Dendritic cell treated with granulocyte-macrophage colony-stimulating factor and Interleukin-4, amounts not matched to agents 40 ng/mL and 50 ng/mL, for 4 days (primary cell): ENCODE measurements at regions of chr1 and their contacts with region 1.

Region 1: GRCh38 chr1:8348777-8349491 is 31.0 kb downstream of the SLC45A1 start:
- H3K4me3 Mint-ChIP-seq: no peak overlapping the region
- H3K27ac Mint-ChIP-seq: peak overlapping the region; percentile 11
- H3K4me1 Mint-ChIP-seq: peaks cover 5% of the 10 kb centered on the region
- H3K27me3 Mint-ChIP-seq: peaks cover 9% of the 10 kb centered on the region

Region 2: GRCh38 chr1:8015036-8015808 is 333.7 kb before region 1 on chr1:
- intact Hi-C with region 1: loop called (anchors 1 kb)
- H3K4me3 Mint-ChIP-seq: no peak overlapping the region
- H3K27ac Mint-ChIP-seq: no peak overlapping the region
- H3K4me1 Mint-ChIP-seq: peaks cover 3% of the 10 kb centered on the region
- H3K27me3 Mint-ChIP-seq: peaks cover 23% of the 10 kb centered on the region

Region 3: DNA sequence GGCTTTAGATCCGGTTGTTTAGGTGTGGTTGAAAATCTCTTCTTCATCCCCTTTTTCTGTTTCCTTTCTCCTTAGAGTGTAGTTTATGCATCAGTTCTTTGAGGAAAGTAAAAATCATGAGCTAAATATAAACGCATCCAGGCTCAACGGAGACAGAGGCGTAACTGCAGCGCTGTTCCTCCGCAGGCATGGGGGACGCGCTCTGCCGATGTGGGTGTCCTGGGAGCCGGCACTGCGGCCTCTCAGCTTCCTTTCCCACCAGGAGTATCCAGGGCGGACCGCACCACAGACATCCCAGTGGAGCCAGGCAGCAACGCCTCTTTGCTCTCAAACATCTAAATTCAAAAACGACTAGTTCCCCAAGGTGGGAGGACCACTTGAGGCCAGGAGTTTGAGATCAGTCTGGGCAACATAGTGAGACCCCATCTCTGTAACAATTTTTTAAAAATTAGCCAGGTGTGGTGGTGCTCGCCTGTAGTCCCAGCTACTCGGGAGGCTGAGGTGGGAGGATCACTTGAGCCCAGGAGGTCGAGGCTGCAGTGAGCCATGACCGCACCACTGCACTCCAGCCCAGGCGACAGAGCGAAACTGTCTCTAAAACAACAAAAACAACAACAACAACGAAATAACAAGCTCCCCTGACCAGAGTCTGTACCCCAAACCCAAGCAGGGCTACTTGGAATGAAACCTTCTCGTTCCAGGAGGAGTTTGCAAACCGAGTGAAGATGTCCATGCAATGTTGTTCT is 14.7 kb before region 1 on chr1:
- intact Hi-C with region 1: no loop called
- H3K4me3 Mint-ChIP-seq: no peak overlapping the region
- H3K27ac Mint-ChIP-seq: no peak overlapping the region
- H3K4me1 Mint-ChIP-seq: no peaks in the 10 kb centered on the region
- H3K27me3 Mint-ChIP-seq: peaks cover 9% of the 10 kb centered on the region

Region 4: GRCh38 chr1:8396786-8397406 is 48.0 kb after region 1 on chr1:
- intact Hi-C with region 1: no loop called
- H3K4me3 Mint-ChIP-seq: no peak overlapping the region
- H3K27ac Mint-ChIP-seq: peak overlapping the region; percentile 66
- H3K4me1 Mint-ChIP-seq: peaks cover 57% of the 10 kb centered on the region
- H3K27me3 Mint-ChIP-seq: no peaks in the 10 kb centered on the region